Dendritic cell treated with granulocyte-macrophage colony-stimulating factor and Interleukin-4, amounts not matched to agents 40 ng/mL and 50 ng/mL, for 4 days (primary cell): ENCODE measurements at regions of chr3 and their contacts with region 1.

Region 1: DNA sequence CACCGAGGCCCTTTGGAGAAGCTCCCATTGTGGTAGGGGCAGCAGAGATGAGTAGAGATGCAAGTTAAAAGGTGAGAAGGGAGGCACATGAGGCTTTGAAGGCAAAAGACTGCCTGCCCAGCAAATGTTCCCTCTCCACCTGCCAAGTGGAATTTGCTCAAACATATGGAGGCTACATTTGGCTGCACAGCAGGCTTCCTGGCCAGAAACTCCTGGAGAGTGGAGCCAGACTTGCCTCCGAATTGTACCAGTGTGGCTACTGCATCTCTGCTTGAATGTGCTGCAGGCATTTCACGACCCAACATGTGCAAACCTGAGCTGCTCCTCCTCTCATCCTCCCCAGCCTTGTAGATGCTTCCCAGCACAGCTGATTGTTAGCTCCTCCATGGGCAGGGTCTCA is 229.2 kb downstream of the ZNF621 start:
- H3K4me3 Mint-ChIP-seq: no peak overlapping the region
- H3K27ac Mint-ChIP-seq: no peak overlapping the region
- H3K4me1 Mint-ChIP-seq: peaks cover 29% of the 10 kb centered on the region
- H3K27me3 Mint-ChIP-seq: peaks cover 7% of the 10 kb centered on the region

Region 2: DNA sequence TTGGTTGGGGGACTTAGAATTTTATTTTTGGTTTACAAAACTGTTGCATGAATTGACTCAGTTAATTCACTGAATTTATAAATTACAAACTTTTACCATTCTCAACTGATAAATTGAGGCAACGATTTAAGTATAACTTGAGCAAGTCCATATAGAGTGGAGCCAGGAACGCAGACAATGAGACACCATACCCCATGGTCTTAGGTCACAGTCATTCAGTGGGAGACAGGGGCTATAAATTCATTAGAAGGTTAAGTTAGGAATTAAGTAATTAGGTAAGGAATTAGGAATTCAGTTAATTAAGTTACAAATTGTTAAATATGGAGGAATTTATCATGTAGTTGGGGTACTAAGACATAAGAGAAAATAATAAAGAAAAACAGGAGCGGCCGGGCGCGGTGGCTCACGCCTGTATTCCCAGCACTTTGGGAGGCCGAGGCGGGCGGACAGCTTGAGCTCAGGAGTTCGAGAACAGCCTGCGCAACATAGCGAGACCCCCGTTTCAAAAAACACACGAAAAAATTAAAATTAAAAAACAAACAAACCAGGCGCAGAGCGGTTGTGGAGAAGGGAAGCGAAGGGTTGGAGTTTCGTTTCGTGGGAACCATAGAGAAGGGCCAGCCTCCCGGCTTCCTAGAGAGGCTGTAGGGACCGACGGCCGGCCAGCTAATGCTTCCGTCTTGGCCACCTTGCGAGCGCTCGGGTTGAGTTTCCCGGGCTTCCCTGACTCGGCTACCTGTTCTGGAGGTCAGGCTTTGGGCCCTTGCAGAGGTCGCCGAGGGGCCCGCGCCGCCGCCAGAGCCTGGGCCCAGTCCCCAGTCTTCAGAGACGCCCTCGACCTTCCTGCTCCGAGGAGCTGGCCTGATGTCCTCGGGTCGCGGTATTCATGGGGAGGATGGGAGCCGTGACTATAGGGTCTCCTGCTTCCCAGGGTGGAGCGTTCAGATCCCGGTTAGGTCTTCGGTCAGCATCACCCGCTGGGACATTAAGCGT is 277.2 kb before region 1 on chr3 and contains the start of gene ZNF619:
- intact Hi-C with region 1: no loop called
- H3K4me3 Mint-ChIP-seq: peak within 1 kb of the TSS; percentile 95
- H3K27ac Mint-ChIP-seq: peak within 1 kb of the TSS; percentile 99
- H3K4me1 Mint-ChIP-seq: peaks cover 17% of the 10 kb centered on the region
- H3K27me3 Mint-ChIP-seq: no peaks in the 10 kb centered on the region

Region 3: GRCh38 chr3:40719660-40720287 is 34.2 kb before region 1 on chr3:
- intact Hi-C with region 1: loop called (anchors 5 kb)
- H3K4me3 Mint-ChIP-seq: no peak overlapping the region
- H3K27ac Mint-ChIP-seq: no peak overlapping the region
- H3K4me1 Mint-ChIP-seq: peaks cover 35% of the 10 kb centered on the region
- H3K27me3 Mint-ChIP-seq: no peaks in the 10 kb centered on the region